Cardiac septum (tissue), 1 donor: ENCODE measurements at regions of chr2 and their contacts with region 1.

Region 1: DNA sequence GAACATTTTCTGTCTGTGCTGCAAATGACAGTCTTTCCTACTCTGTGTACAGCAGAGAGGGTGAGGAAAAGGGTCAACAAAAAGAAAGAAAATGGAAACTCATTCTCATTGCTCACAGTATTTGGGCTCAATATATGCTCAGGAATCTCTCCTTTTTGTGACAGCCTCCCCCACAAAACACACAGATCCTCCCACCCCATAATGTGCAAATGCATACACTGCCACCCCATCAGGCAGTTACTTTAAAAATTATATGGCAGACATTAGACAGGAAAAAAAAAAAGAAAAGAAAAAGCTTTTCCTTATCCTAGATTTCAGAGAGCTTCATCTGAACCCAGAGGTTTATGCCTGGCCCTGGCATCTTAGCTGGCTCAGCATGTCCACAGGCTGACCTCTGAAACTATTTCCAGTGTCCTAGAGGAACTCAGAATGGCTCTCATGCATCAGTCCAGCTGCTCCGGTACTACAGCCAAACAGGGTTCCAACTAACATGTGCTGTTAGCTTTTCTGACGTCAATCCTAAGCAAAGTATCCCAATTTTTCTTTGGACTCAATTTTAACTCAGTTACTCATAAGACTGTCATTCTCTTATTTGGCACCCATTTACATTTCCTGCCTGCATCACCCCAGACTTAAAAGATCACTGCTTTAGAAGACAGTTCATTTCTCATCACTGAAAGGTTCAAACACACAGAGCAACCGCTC is 105.9 kb downstream of the RBMS1 start:
- DNase-seq: no peak

Region 2: GRCh38 chr2:160574468-160575142 is 186.9 kb after region 1 on chr2:
- intact Hi-C with region 1: loop called (anchors 5 kb)
- DNase-seq: no peak

Region 3: GRCh38 chr2:160719116-160719515 is 331.4 kb after region 1 on chr2:
- intact Hi-C with region 1: no loop called
- DNase-seq: no peak